K562 (cell line): ENCODE measurements at regions of chr1 and their contacts with region 1.

Region 1: GRCh38 chr1:91201176-91201575 is 179.3 kb upstream of the ZNF644 start:
- DNase-seq: no peak
- ATAC-seq: no peak
- H3K4me3 ChIP-seq: no peak overlapping the region
- H3K27ac ChIP-seq: no peak overlapping the region
- H3K4me1 ChIP-seq: no peaks in the 10 kb centered on the region
- H3K27me3 ChIP-seq: peaks cover 8 to 11% of the 10 kb centered on the region in 2 experiments; a peak in 4 of 5 replicates
- CTCF ChIP-seq: no peak
- EP300 ChIP-seq: no peak
- POLR2A ChIP-seq: no peak
- RAD21 ChIP-seq: no peak

Region 2: GRCh38 chr1:91261655-91262054 is 60.5 kb after region 1 on chr1:
- CTCF ChIA-PET with region 1: no interaction called
- POLR2A ChIA-PET with region 1: no interaction called
- in situ Hi-C with region 1: no loop called
- intact Hi-C with region 1: loop called (anchors 10 kb)
- DNase-seq: no peak
- ATAC-seq: no peak
- H3K4me3 ChIP-seq: no peak overlapping the region
- H3K27ac ChIP-seq: no peak overlapping the region
- H3K4me1 ChIP-seq: no peaks in the 10 kb centered on the region
- H3K27me3 ChIP-seq: no peaks in the 10 kb centered on the region
- CTCF ChIP-seq: no peak
- EP300 ChIP-seq: no peak
- POLR2A ChIP-seq: no peak
- RAD21 ChIP-seq: no peak

Region 3: DNA sequence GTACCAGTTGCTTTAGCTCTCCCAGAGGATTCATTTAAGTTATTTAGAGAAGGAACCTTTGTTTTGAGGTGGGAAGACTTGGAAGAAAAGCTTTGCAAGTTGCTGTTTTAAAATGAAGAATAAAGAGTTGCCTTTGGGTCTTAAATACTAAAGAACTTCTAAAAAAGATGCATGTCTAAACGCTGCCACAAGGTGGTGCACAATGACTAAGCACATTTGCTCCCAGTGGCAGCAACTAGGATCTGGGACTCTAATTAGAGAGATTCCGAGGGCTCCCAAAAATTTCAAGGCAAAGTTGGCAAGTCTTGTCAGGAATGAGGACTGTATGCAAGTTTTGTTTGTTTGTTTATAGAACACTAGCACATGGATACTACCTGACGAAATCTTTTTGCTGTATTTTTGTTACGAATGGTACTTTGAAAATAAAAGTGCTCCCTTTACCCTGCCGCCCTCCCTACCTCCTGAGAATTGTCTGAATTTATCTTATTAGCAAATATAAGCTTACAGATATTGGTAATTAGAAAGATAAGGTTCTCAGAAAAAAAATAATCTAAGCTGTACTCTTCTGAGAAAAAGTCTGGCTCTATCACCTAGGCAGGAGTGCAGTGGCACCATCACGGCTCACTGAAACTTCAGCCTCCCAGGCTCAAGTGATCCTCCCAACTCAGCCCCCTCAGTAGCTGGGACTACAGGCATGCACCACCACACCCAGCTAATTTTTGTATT is 81.7 kb after region 1 on chr1:
- CTCF ChIA-PET with region 1: no interaction called
- POLR2A ChIA-PET with region 1: no interaction called
- in situ Hi-C with region 1: no loop called
- intact Hi-C with region 1: no loop called
- DNase-seq: peak; percentile 59 to 79 (median 62)
- ATAC-seq: peak; percentile 84
- H3K4me3 ChIP-seq: no peak overlapping the region
- H3K27ac ChIP-seq: no peak overlapping the region
- H3K4me1 ChIP-seq: peaks cover 0 to 5% of the 10 kb centered on the region in 2 experiments; a peak in 2 of 5 replicates
- H3K27me3 ChIP-seq: no peaks in the 10 kb centered on the region
- CTCF ChIP-seq: peak; percentile 70 to 88 (median 79)
- EP300 ChIP-seq: no peak
- POLR2A ChIP-seq: no peak
- RAD21 ChIP-seq: peak; percentile 91 to 92